Spleen (tissue), 13 donors: ENCODE measurements at regions of chr16 and their contacts with region 1.

Region 1: GRCh38 chr16:81885976-81886586 is 107.0 kb downstream of the PLCG2 start:
- DNase-seq: no peak
- H3K4me3 ChIP-seq: no peak overlapping the region
- H3K27ac ChIP-seq: no peak overlapping the region
- H3K4me1 ChIP-seq: peaks cover 0 to 17% (median 0%) of the 10 kb centered on the region in 6 donors
- H3K27me3 ChIP-seq: no peaks in the 10 kb centered on the region
- CTCF ChIP-seq: peak in 10 of 11 experiments; percentile 24 to 79 (median 62)
- POLR2A ChIP-seq: no peak

Region 2: DNA sequence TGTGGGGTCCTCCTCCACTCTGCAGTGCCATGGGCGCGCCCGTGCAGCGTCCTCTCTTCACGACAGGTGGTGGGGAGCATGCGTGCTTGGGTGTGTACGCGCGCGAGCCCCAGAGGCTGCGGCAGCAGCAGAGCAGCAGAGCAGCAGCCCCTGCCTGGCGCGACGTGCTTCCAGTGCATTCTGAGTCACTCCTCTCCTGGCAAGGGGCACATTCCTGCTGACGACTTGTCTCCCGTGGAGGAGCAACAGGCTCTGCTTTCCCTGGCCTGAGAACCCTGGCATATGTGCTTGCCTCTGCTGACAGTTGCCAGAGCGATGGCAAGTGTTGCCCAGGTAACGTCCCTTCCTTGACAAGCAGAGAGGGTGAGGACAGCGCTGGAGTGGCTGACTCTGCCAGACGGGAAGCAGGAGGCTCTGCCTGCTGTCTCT is 240.8 kb before region 1 on chr16:
- intact Hi-C with region 1: no loop called
- DNase-seq: peak; percentile 54
- H3K4me3 ChIP-seq: no peak overlapping the region
- H3K27ac ChIP-seq: no peak overlapping the region
- H3K4me1 ChIP-seq: peaks cover 0 to 65% (median 21%) of the 10 kb centered on the region in 6 donors
- H3K27me3 ChIP-seq: no peaks in the 10 kb centered on the region
- CTCF ChIP-seq: no peak
- POLR2A ChIP-seq: no peak

Region 3: DNA sequence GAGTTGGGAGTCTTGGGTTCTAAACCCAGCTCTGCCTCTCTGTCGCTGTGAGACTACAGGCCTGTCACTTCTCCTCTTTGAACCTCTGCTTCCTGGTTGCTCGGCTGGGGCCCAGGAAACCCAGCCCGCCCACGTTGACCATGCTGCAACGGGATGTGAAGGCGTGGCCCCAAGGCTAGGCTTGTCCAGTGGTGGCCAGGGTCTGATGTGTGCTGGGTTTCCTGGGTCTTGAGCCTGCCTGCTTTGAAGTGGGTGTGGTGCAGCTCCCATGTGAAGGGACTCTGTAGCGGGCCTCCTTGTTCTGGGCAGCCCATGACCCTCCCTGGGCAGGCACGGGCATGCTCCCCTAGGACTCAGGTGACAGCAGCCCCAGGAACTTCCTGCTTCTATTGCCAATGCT is 42.9 kb after region 1 on chr16:
- intact Hi-C with region 1: no loop called
- DNase-seq: no peak
- H3K4me3 ChIP-seq: no peak overlapping the region
- H3K27ac ChIP-seq: no peak overlapping the region
- H3K4me1 ChIP-seq: peaks cover 0 to 9% (median 0%) of the 10 kb centered on the region in 6 donors
- H3K27me3 ChIP-seq: no peaks in the 10 kb centered on the region
- CTCF ChIP-seq: no peak
- POLR2A ChIP-seq: no peak

Region 4: GRCh38 chr16:82229796-82230619 is 343.9 kb after region 1 on chr16:
- intact Hi-C with region 1: loop called (anchors 5 kb)
- DNase-seq: no peak
- H3K4me3 ChIP-seq: no peak overlapping the region
- H3K27ac ChIP-seq: no peak overlapping the region
- H3K4me1 ChIP-seq: no peaks in the 10 kb centered on the region
- H3K27me3 ChIP-seq: peaks cover 0 to 41% (median 0%) of the 10 kb centered on the region in 7 donors
- CTCF ChIP-seq: peak; percentile 55 to 84 (median 74)
- POLR2A ChIP-seq: no peak

Region 5: GRCh38 chr16:82373976-82374375 is 487.9 kb after region 1 on chr16:
- intact Hi-C with region 1: no loop called
- DNase-seq: no peak
- H3K4me3 ChIP-seq: no peak overlapping the region
- H3K27ac ChIP-seq: no peak overlapping the region
- H3K4me1 ChIP-seq: no peaks in the 10 kb centered on the region
- H3K27me3 ChIP-seq: peaks cover 0 to 49% (median 0%) of the 10 kb centered on the region in 7 donors
- CTCF ChIP-seq: no peak
- POLR2A ChIP-seq: no peak